Adrenal gland (tissue), 19 donors: ENCODE measurements at regions of chr7 and their contacts with region 1.

Region 1: GRCh38 chr7:50418086-50418515 is 32.0 kb downstream of the FIGNL1 start:
- DNase-seq: peak; percentile 65 to 88 (median 72)
- H3K4me3 ChIP-seq: no peak overlapping the region
- H3K27ac ChIP-seq: no peak overlapping the region
- H3K4me1 ChIP-seq: no peaks in the 10 kb centered on the region
- H3K27me3 ChIP-seq: no peaks in the 10 kb centered on the region
- CTCF ChIP-seq: peak; percentile 63 to 81 (median 72)
- POLR2A ChIP-seq: no peak

Region 2: GRCh38 chr7:50092579-50093491 is 325.3 kb before region 1 on chr7 and contains the start of gene ZPBP:
- intact Hi-C with region 1: loop called in 1 of 2 experiments (anchors 10 kb)
- DNase-seq: peak in 4 of 7 donors; percentile 31 to 37 (median 32)
- H3K4me3 ChIP-seq: peak within 1 kb of the TSS in 1 of 4 donors; percentile 55
- H3K27ac ChIP-seq: no peak within 1 kb of the TSS
- H3K4me1 ChIP-seq: peaks cover 5 to 6% of the 10 kb centered on the region in 2 donors
- H3K27me3 ChIP-seq: no peaks in the 10 kb centered on the region
- CTCF ChIP-seq: peak; percentile 56 to 82 (median 71)
- POLR2A ChIP-seq: no peak
- total RNA-seq, gene ZPBP: 0.72 TPM in 1 of 9 donors, not detected in the others

Region 3: GRCh38 chr7:50142425-50143017 is 275.6 kb before region 1 on chr7:
- intact Hi-C with region 1: loop called in 1 of 2 experiments (anchors 5 kb)
- DNase-seq: peak in 1 of 7 donors; percentile 18
- H3K4me3 ChIP-seq: peak overlapping the region in 1 of 4 donors; percentile 28
- H3K27ac ChIP-seq: no peak overlapping the region
- H3K4me1 ChIP-seq: no peaks in the 10 kb centered on the region
- H3K27me3 ChIP-seq: no peaks in the 10 kb centered on the region
- CTCF ChIP-seq: peak; percentile 50 to 78 (median 60)
- POLR2A ChIP-seq: no peak